A549 (cell line): ENCODE measurements at regions of chr4 and their contacts with region 1.

Region 1: DNA sequence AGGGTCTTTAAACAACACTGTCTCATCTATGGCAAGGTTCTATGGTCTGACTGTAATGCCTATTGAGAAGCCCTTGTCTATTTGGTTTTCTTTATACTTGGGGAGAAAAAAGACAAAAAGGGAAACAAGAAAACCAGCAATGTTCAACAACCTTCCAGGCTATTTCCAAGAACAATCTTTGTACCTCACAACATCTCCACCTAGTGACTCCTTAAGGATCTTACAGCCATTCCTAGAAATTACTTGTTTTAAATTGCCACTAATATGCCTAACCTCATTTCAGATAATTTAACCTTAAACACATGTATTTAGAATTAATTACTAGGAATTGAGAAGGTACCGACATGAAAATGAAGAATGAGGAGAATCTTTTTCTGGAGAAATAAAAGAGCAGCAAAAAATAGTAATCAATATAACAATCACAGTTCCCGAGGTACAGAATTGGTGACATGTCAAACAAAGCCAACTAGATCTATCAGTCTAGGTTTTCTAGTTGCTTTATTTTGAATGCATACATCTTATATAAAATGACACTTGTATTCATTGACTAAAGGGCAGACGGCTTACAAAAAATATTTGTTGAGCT is 1.6 kb upstream of the RBM46 start:
- DNase-seq: peak; percentile 13 to 42
- ATAC-seq: peak in 1 of 2 experiments; percentile 62; a peak in 2 of 6 replicates
- H3K4me3 ChIP-seq: no peak overlapping the region
- H3K27ac ChIP-seq: no peak overlapping the region
- H3K4me1 ChIP-seq: no peaks in the 10 kb centered on the region
- CTCF ChIP-seq: peak; percentile 57
- EP300 ChIP-seq: no peak
- POLR2A ChIP-seq: no peak
- RAD21 ChIP-seq: peak; percentile 56 to 60

Region 2: DNA sequence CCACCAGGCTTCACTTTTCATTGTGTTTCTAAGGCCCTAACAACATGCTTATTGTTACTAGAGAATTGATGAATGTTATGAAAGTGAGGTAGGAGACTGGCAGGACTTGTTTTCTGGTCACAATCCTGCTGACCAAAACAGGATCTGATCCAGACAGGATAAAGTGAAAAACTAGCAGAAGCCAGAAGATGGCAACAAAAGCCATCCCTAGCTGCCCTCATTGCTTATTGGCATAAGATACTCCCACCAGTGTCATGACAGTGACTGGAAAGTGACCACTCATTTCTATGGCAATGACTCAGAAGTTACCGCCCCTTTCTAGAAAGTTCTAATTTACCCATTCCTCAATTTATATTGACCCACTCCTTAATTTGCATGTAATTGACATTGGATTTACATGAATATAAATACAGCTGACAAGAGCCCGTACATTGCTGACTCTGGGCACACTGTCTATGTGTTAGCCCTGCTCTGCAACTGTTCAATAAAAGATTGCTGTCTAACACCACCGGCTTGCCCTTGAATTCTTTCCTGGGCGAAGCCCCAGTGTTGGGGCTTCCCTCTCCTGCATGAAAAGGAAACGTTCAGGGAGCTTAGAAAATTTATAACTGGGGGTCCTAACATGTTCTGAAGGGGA is 137.0 kb before region 1 on chr4:
- CTCF ChIA-PET with region 1: interaction called, 16 read pairs
- POLR2A ChIA-PET with region 1: no interaction called
- DNase-seq: no peak
- ATAC-seq: no peak
- H3K4me3 ChIP-seq: no peak overlapping the region
- H3K27ac ChIP-seq: no peak overlapping the region
- H3K4me1 ChIP-seq: no peaks in the 10 kb centered on the region
- CTCF ChIP-seq: no peak
- EP300 ChIP-seq: no peak
- POLR2A ChIP-seq: no peak
- RAD21 ChIP-seq: no peak